ENCODE measurements at regions of chr17 and their contacts with region 1.

Region 1: DNA sequence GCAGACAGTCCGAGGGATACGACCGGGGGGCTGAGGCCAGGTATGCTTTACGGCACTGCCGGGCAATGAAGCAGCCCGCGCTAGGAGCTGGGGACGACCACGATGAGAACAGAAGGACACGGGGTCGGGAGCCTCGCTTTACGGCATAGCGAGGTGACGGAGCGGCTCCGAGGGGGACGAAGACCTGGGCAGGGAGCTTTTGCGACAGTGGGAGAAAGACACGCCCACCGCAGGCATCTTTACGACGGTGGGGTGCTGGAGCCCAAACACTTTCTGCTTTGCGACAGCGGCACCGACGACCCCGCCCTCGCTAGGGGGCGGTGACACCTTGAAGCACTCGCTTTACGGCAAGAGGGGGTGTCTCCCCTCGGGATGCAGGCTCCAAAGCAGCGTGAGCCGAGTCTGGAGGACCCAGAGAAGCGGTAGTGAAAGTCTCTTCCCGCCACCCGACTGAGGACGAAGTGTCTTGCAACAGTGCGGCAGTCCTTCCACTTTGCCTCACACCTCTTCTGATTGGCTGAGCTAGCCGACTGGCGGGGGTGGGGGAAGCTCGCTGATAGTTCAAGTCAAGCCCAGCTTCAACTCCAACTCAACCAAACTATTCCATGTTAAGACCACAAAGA is 350 bp upstream of the NEURL4 start:
- DNase-seq: peak; percentile 97
- H3K4me3 Mint-ChIP-seq: peak overlapping the region; percentile 85
- H3K27ac Mint-ChIP-seq: peak overlapping the region; percentile 93
- H3K4me1 Mint-ChIP-seq: peaks cover 49% of the 10 kb centered on the region
- H3K27me3 Mint-ChIP-seq: no peaks in the 10 kb centered on the region

Region 2: DNA sequence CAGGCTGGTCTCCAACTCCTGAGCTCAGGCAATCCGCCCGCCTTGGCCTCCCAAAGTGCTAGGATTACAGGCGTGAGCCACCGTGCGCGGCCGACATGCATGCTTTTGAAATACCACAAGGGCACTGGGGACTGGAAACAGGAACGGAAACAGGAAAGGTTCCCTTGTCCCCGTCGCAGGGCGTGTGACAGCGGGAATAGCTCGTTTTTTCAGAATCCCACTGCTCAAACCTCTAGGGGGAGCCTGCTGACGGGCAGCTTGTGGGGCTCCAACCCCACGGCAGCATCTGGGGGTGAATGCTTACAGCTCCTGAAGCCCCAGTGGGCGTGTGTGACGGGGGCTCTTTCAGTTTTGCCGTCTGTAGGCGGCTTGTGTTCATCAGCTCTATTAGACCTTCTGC is 196.1 kb before region 1 on chr17:
- CTCF ChIA-PET with region 1: no interaction called
- POLR2A ChIA-PET with region 1: no interaction called
- DNase-seq: peak; percentile 27
- H3K4me3 Mint-ChIP-seq: peak overlapping the region; percentile 30
- H3K27ac Mint-ChIP-seq: no peak overlapping the region
- H3K4me1 Mint-ChIP-seq: peaks cover 20% of the 10 kb centered on the region
- H3K27me3 Mint-ChIP-seq: peaks cover 15% of the 10 kb centered on the region

Region 3: DNA sequence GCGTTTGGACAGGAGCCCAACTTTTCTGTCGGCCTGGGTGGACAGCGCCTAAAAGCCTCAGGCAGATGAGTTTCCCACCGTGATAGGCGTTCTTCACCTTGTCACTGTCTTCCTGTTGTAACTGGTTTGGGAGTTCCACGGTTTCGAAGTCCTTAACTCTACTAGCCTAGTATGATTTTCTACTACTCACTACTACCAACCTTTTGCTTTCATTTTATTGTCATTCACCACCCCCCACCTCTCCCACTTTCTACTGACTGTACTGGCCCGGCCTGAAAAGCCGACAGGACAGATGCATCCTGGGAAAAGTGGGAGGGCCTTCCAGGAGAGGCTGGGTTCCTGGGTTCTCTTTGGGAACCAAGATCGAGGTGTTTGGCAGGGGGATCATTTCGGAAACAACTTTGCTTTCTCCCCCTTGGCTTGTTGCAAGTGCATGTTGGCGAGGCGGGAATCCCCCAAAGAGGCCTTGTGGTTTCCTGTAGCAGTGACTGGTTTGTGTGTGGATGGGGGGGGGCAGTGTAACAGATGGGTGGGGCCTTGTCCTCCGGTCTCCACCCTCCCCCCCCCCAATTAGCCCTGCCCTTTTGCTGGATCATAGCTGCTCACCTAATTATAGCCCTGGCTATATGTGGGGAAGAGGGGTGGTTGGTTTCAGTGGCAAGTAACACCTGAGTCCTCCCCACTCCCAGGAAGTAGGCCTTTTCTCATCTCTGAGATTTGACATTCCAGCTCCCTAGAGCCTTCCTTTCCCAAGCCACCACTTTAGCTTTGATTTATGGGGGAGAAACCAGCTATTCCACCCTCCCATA is 20.7 kb before region 1 on chr17:
- CTCF ChIA-PET with region 1: interaction called, 39 read pairs
- POLR2A ChIA-PET with region 1: interaction called, 109 read pairs
- DNase-seq: peak; percentile 84
- H3K4me3 Mint-ChIP-seq: peak overlapping the region; percentile 82
- H3K27ac Mint-ChIP-seq: peak overlapping the region; percentile 94
- H3K4me1 Mint-ChIP-seq: peaks cover 57% of the 10 kb centered on the region
- H3K27me3 Mint-ChIP-seq: no peaks in the 10 kb centered on the region

Region 4: GRCh38 chr17:7314719-7315569 is 14.5 kb before region 1 on chr17 and contains the start of gene GPS2:
- CTCF ChIA-PET with region 1: interaction called, 39 read pairs
- POLR2A ChIA-PET with region 1: interaction called, 109 read pairs
- DNase-seq: peak; percentile 95
- H3K4me3 Mint-ChIP-seq: peak within 1 kb of the TSS; percentile 93
- H3K27ac Mint-ChIP-seq: peak within 1 kb of the TSS; percentile 91
- H3K4me1 Mint-ChIP-seq: peaks cover 58% of the 10 kb centered on the region
- H3K27me3 Mint-ChIP-seq: no peaks in the 10 kb centered on the region
- total RNA-seq, gene GPS2: 69.8 to 74.7 TPM

Region 5: DNA sequence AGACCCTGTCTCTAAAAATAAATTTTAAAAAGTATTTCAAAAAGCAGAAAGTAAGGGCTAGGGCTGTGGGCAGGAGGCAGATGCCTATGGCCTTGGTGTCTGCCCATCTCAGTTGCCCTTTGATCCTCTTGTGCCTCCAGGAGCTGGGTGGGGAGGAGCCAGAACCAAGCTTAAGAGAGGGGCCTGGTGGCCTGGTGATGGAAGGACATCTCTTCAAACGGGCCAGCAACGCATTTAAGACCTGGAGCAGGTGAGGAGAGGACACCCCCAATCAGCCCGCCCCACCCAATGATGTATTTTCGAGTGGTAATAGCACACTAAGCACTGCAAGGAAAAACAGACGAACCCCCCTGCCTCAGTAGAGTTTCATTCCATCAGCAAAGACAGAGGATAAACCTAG is 14.9 kb after region 1 on chr17:
- CTCF ChIA-PET with region 1: interaction called, 20 read pairs
- POLR2A ChIA-PET with region 1: interaction called, 18 read pairs
- DNase-seq: no peak
- H3K4me3 Mint-ChIP-seq: no peak overlapping the region
- H3K27ac Mint-ChIP-seq: no peak overlapping the region
- H3K4me1 Mint-ChIP-seq: peaks cover 41% of the 10 kb centered on the region
- H3K27me3 Mint-ChIP-seq: no peaks in the 10 kb centered on the region

Region 6: DNA sequence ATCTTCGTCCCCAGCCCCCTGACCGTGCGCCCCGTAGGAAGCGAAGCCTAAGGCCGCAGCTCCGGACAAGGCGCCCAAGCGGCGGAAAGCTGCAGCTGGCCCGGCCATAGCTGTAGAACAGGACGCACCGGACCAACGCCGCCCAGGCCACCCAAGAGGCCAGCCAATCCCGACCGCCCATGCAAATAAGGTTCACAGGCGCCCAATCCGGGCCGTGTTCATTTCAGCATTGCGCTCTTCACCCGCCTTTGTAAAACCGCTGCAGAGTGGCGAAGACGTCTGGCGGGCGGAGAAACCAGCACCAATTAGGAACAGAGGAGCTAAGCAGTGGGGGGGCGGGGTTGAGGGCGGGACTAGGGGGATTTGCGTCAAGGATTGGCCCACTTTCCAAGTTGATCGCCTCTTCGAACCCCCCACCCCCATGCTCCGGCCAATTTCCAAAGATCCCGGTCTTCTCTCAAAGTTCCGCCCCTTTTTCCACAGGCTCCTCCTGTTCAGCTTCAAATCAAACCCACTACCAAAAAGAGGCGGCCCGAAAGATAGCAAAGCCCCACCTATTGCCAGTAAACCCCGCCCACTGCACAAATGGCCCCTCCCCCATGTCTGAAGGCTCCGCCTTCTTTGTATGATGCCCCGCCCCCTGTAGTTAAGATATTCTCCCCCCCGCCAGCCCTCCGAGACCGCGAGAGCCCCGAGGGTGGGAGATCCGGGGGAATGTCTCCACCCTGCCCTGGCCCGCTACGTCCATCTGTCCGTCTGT is 74.7 kb after region 1 on chr17 and contains the start of gene TMEM256:
- CTCF ChIA-PET with region 1: no interaction called
- POLR2A ChIA-PET with region 1: no interaction called
- DNase-seq: peak; percentile 98
- H3K4me3 Mint-ChIP-seq: peak within 1 kb of the TSS; percentile 95
- H3K27ac Mint-ChIP-seq: peak within 1 kb of the TSS; percentile 91
- H3K4me1 Mint-ChIP-seq: peaks cover 27% of the 10 kb centered on the region
- H3K27me3 Mint-ChIP-seq: peaks cover 15% of the 10 kb centered on the region
- total RNA-seq, gene TMEM256: 73.2 to 77.0 TPM

Measured in activated CD4-positive, alpha-beta memory T cell treated with anti-CD3 and anti-CD28 coated beads, Interleukin-2, amount 10 ng/mL, durations not matched to agents 7 days and 5 days (primary cell).